HCT116 (cell line): ENCODE measurements at regions of chr7 and their contacts with region 1.

Region 1: DNA sequence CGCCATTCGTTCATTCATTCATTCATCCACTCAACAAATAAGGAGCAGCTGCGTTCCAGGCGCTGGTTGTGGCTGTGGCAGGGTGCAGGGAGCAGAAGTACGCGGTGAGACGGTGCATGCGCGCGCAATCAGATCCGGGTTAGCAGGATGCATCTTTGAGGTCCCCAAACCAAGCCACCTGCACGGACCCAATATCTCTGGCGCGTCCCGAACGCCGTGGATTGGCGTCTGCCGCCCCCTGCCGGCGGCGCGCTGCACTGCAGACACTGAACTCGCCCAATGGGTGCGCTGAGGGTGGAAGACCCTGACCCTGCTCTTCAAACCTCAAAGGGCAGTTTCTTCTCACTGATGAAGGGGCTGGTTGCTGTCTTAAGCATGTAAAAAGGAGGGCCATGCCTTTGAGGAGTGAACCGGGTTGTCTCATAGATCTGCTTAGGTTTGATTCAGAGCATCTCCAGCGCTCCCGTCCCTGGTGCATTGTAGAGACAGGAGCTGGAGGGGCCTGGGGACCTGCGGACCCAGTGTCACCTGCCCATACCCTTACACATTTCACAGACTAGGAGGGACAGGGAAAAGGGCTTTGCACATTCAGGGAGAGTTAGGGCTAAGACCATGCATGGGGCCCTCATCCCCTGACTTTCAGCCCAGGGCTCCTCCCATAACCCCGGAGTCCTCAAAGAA is 102.5 kb downstream of the RAMP3 start:
- DNase-seq: peak; percentile 31
- ATAC-seq: peak; percentile 97
- H3K4me3 ChIP-seq: 0 out of 4 replicates have a peak overlapping the region, but pooled peaks of 1 of the 2 experiments have one; percentile 2
- H3K27ac ChIP-seq: no peak overlapping the region
- H3K4me1 ChIP-seq: peaks cover 0 to 4% of the 10 kb centered on the region in 2 experiments; a peak in 1 of 4 replicates
- H3K27me3 ChIP-seq: peaks cover 6% of the 10 kb centered on the region; the same call in 1 of the 2 replicates
- CTCF ChIP-seq: peak; percentile 86 to 99 (median 99)
- POLR2A ChIP-seq: no peak
- RAD21 ChIP-seq: peak; percentile 89

Region 2: GRCh38 chr7:45157653-45158401 is 102.3 kb before region 1 on chr7 and contains the start of gene RAMP3:
- CTCF ChIA-PET with region 1: interaction called, 7 read pairs
- POLR2A ChIA-PET with region 1: no interaction called
- RAD21 ChIA-PET with region 1: no interaction called
- intact Hi-C with region 1: loop called (anchors 1 kb)
- DNase-seq: no peak
- ATAC-seq: no peak
- H3K4me3 ChIP-seq: no peak within 1 kb of the TSS
- H3K27ac ChIP-seq: no peak within 1 kb of the TSS
- H3K4me1 ChIP-seq: peaks cover 0 to 7% of the 10 kb centered on the region in 2 experiments; a peak in 1 of 4 replicates
- H3K27me3 ChIP-seq: no peaks in the 10 kb centered on the region
- CTCF ChIP-seq: no peak
- POLR2A ChIP-seq: no peak
- RAD21 ChIP-seq: no peak
- total RNA-seq, gene RAMP3: not detected

Region 3: DNA sequence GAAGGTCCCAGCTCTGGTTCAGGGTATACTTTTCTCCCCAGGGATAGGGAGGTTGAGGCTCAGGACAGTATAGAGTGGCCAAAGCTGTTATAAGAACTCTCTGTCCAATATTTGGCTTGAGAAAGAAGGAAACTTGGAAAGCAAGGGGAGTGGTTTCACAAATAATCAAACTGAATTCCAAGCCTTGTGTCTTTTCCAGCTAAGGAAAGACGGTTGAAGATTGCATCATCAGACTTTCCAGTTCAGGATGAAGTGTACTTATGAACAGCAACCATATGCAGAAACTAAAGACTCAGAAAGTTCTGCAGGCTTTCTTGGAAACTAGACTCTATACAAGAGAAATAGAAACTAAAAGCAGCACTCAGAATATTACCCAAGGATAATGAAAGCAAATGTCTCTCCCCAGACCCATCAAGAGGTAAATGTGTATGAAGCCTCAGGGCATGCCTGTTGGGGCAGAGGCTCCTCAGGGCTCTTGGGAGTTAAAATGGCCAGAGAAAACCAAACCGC is 56.1 kb before region 1 on chr7:
- CTCF ChIA-PET with region 1: no interaction called
- POLR2A ChIA-PET with region 1: no interaction called
- RAD21 ChIA-PET with region 1: no interaction called
- intact Hi-C with region 1: loop called (anchors 5 kb)
- DNase-seq: no peak
- ATAC-seq: no peak
- H3K4me3 ChIP-seq: no peak overlapping the region
- H3K27ac ChIP-seq: no peak overlapping the region
- H3K4me1 ChIP-seq: no peaks in the 10 kb centered on the region
- H3K27me3 ChIP-seq: peaks cover 46% of the 10 kb centered on the region
- CTCF ChIP-seq: no peak
- POLR2A ChIP-seq: no peak
- RAD21 ChIP-seq: no peak